B cell (primary cell): ENCODE measurements at regions of chr10 and their contacts with region 1.

Region 1: GRCh38 chr10:62025901-62026879 is 124.7 kb downstream of the ARID5B start:
- DNase-seq: no peak
- ATAC-seq: no peak
- H3K4me3 ChIP-seq: no peak overlapping the region
- H3K4me3 Mint-ChIP-seq: peak overlapping the region; percentile 24
- H3K27ac ChIP-seq: peak overlapping the region in 1 of 2 donors; percentile 98
- H3K27ac Mint-ChIP-seq: peak overlapping the region; percentile 96
- H3K4me1 ChIP-seq: peaks cover 76 to 79% of the 10 kb centered on the region in 2 donors
- H3K4me1 Mint-ChIP-seq: peaks cover 88% of the 10 kb centered on the region
- H3K27me3 ChIP-seq: no peaks in the 10 kb centered on the region
- H3K27me3 Mint-ChIP-seq: no peaks in the 10 kb centered on the region
- CTCF ChIP-seq: no peak

Region 2: DNA sequence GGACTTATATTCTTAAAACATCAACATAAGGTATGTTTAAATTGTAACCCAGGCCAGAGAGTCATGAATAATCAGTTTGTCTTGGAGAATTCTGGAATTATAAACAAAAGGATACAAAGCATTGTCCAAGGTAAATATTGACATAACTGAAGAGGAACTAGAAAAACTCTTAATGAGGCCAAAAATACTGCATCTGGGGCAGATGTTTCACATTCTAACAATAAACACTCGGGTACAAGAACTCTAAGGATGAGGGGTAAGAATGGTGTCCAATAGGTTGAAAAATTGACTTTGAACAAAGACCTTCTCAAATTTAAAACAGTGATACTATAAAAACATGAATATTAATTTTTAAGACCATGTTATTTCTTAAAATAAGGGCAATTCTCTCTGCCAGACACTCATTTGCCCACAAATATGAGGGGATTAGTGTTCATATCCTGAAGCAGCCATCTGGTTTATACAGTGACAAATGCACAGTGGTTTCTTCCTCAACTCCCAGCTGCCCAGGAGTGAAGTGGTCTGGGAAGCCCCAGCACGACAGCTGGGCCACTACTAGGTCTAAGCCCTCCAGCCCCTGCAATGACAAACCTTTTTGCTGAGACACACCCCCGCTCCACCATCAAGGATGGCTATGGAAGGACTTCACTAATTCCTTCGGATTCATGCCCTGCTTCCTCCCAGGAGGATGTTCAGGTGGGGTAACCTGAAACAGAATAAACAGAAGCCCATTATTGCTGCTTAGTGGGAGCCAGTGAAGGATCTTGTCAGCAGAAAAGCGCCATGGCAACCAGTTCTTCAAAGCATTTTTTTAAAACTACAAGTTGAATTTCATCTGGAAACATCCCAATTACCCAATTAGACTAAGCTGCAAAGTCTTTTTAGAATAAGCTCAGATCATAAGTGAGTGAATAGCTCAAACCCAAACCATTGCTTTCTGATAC is 232.2 kb before region 1 on chr10:
- CTCF ChIA-PET with region 1: no interaction called
- POLR2A ChIA-PET with region 1: no interaction called
- intact Hi-C with region 1: no loop called
- DNase-seq: no peak
- ATAC-seq: no peak
- H3K4me3 ChIP-seq: no peak overlapping the region
- H3K4me3 Mint-ChIP-seq: no peak overlapping the region
- H3K27ac ChIP-seq: no peak overlapping the region
- H3K27ac Mint-ChIP-seq: no peak overlapping the region
- H3K4me1 ChIP-seq: no peaks in the 10 kb centered on the region
- H3K4me1 Mint-ChIP-seq: no peaks in the 10 kb centered on the region
- H3K27me3 ChIP-seq: no peaks in the 10 kb centered on the region
- H3K27me3 Mint-ChIP-seq: no peaks in the 10 kb centered on the region
- CTCF ChIP-seq: no peak

Region 3: DNA sequence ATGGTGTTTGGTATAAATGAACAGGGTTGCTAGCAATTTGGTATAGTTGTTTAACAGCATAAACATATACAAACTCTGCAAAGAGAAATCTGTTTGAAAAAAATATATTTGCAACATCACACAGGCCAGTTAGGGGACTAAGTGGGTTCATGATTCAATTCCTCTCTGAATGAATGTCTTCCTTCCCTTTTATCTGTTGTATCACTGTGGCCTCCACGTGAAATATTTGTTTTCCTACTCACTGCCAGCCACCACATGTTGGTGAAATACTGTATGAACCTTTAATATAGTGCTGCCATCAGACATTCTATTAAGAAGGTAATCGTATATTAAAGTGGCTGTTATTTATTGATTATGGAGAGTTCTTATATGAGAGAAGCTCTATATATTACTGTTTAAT is 32.3 kb after region 1 on chr10:
- CTCF ChIA-PET with region 1: interaction called, 4 read pairs
- POLR2A ChIA-PET with region 1: interaction called, 12 read pairs
- intact Hi-C with region 1: no loop called
- DNase-seq: no peak
- ATAC-seq: no peak
- H3K4me3 ChIP-seq: no peak overlapping the region
- H3K4me3 Mint-ChIP-seq: peak overlapping the region; percentile 61
- H3K27ac ChIP-seq: peak overlapping the region in 1 of 2 donors; percentile 48
- H3K27ac Mint-ChIP-seq: no peak overlapping the region
- H3K4me1 ChIP-seq: peaks cover 51 to 56% of the 10 kb centered on the region in 2 donors
- H3K4me1 Mint-ChIP-seq: peaks cover 86% of the 10 kb centered on the region
- H3K27me3 ChIP-seq: no peaks in the 10 kb centered on the region
- H3K27me3 Mint-ChIP-seq: no peaks in the 10 kb centered on the region
- CTCF ChIP-seq: no peak

Region 4: DNA sequence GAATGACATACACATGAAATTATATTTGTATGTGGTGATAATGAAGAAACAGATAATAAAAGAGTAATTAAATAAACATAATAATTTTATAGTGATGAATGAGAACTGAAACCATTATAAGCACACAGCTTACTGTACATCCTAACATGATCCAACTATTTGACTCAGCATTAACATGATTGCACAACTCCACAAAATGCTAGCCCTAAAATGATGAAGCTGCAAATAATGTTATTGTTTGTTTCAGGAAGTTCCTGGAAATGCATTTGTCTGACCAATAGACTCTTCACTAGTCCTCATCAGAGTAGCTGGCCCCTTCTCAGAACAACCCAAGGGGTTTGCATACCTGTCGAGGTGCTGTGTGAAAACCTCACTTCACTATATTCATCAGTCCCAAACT is 127.0 kb after region 1 on chr10:
- CTCF ChIA-PET with region 1: no interaction called
- POLR2A ChIA-PET with region 1: no interaction called
- intact Hi-C with region 1: no loop called
- DNase-seq: no peak
- ATAC-seq: no peak
- H3K4me3 ChIP-seq: no peak overlapping the region
- H3K4me3 Mint-ChIP-seq: no peak overlapping the region
- H3K27ac ChIP-seq: no peak overlapping the region
- H3K27ac Mint-ChIP-seq: no peak overlapping the region
- H3K4me1 ChIP-seq: peaks cover 6 to 7% of the 10 kb centered on the region in 2 donors
- H3K4me1 Mint-ChIP-seq: peaks cover 6% of the 10 kb centered on the region
- H3K27me3 ChIP-seq: no peaks in the 10 kb centered on the region
- H3K27me3 Mint-ChIP-seq: no peaks in the 10 kb centered on the region
- CTCF ChIP-seq: no peak